ENCODE measurements at regions of chr1 and their contacts with region 1.

Region 1: DNA sequence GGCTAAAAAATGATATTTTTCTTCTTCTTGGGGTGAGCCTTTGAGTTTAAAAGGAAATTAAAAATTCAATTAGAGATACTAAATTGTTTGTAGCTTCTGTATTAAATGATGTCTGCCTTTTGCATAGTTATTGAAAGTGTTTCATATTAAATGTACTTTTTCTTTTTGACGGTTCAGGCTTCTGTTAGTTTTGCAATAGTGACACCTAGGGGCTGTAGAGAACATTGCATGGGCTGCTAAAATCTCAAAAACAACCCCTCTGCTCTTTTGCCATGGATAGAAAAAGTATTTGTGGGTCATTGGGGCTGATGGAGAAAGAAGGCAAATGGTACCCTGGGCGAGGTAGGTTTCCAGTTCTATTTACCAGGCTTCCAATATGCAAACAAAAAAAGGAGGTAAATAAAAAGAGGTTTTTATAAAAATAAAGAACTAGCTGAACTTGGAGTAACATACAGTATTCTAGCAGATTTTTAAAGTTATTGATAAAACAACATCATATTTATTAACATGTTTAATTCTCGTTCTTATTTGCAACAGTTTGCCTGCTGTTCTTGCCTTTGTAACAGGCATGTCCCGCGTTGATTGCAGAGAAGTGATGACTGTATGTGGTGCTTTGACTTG is 115.4 kb upstream of the HOOK1 start:
- DNase-seq: peak in 4 of 5 donors; percentile 42 to 49 (median 48)
- H3K4me3 ChIP-seq: no peak overlapping the region
- H3K4me3 Mint-ChIP-seq: no peak overlapping the region
- H3K27ac ChIP-seq: no peak overlapping the region
- H3K27ac Mint-ChIP-seq: no peak overlapping the region
- H3K4me1 ChIP-seq: peaks cover 22% of the 10 kb centered on the region
- H3K4me1 Mint-ChIP-seq: peaks cover 13 to 19% (median 15%) of the 10 kb centered on the region in 4 donors
- H3K27me3 ChIP-seq: no peaks in the 10 kb centered on the region
- H3K27me3 Mint-ChIP-seq: peaks cover 0 to 2% of the 10 kb centered on the region in 2 donors

Region 2: GRCh38 chr1:58739856-58740466 is 959.4 kb before region 1 on chr1:
- CTCF ChIA-PET with region 1: interaction called, 161 read pairs
- POLR2A ChIA-PET with region 1: no interaction called
- intact Hi-C with region 1: loop called (anchors 1 kb)
- DNase-seq: peak; percentile 39 to 69 (median 58)
- H3K4me3 ChIP-seq: no peak overlapping the region
- H3K4me3 Mint-ChIP-seq: no peak overlapping the region
- H3K27ac ChIP-seq: no peak overlapping the region
- H3K27ac Mint-ChIP-seq: no peak overlapping the region
- H3K4me1 ChIP-seq: no peaks in the 10 kb centered on the region
- H3K4me1 Mint-ChIP-seq: peaks cover 0 to 5% (median 3%) of the 10 kb centered on the region in 4 donors
- H3K27me3 ChIP-seq: no peaks in the 10 kb centered on the region
- H3K27me3 Mint-ChIP-seq: no peaks in the 10 kb centered on the region

Region 3: GRCh38 chr1:58755468-58755872 is 943.9 kb before region 1 on chr1:
- CTCF ChIA-PET with region 1: interaction called, 16 read pairs
- POLR2A ChIA-PET with region 1: no interaction called
- intact Hi-C with region 1: no loop called
- DNase-seq: peak; percentile 22 to 79 (median 28)
- H3K4me3 ChIP-seq: peak overlapping the region in 1 of 2 donors; percentile 9
- H3K4me3 Mint-ChIP-seq: peak overlapping the region; percentile 27 to 84 (median 72)
- H3K27ac ChIP-seq: peak overlapping the region; percentile 13
- H3K27ac Mint-ChIP-seq: peak overlapping the region; percentile 13 to 89 (median 69)
- H3K4me1 ChIP-seq: peaks cover 35% of the 10 kb centered on the region
- H3K4me1 Mint-ChIP-seq: peaks cover 35 to 57% (median 45%) of the 10 kb centered on the region in 4 donors
- H3K27me3 ChIP-seq: no peaks in the 10 kb centered on the region
- H3K27me3 Mint-ChIP-seq: no peaks in the 10 kb centered on the region

Region 4: GRCh38 chr1:58941471-58942289 is 757.7 kb before region 1 on chr1:
- CTCF ChIA-PET with region 1: interaction called, 3 read pairs
- POLR2A ChIA-PET with region 1: no interaction called
- intact Hi-C with region 1: loop called (anchors 1 kb)
- DNase-seq: peak; percentile 62 to 79 (median 76)
- H3K4me3 ChIP-seq: peak overlapping the region in 1 of 2 donors; percentile 21
- H3K4me3 Mint-ChIP-seq: peak overlapping the region; percentile 56 to 86 (median 78)
- H3K27ac ChIP-seq: no peak overlapping the region
- H3K27ac Mint-ChIP-seq: peak overlapping the region; percentile 64 to 88 (median 73)
- H3K4me1 ChIP-seq: peaks cover 59% of the 10 kb centered on the region
- H3K4me1 Mint-ChIP-seq: peaks cover 58 to 69% (median 63%) of the 10 kb centered on the region in 4 donors
- H3K27me3 ChIP-seq: no peaks in the 10 kb centered on the region
- H3K27me3 Mint-ChIP-seq: peaks cover 0 to 5% of the 10 kb centered on the region in 2 donors

Region 5: GRCh38 chr1:59682396-59683080 is 16.8 kb before region 1 on chr1:
- CTCF ChIA-PET with region 1: interaction called, 39 read pairs
- POLR2A ChIA-PET with region 1: no interaction called
- intact Hi-C with region 1: no loop called
- DNase-seq: no peak
- H3K4me3 ChIP-seq: no peak overlapping the region
- H3K4me3 Mint-ChIP-seq: no peak overlapping the region
- H3K27ac ChIP-seq: no peak overlapping the region
- H3K27ac Mint-ChIP-seq: no peak overlapping the region
- H3K4me1 ChIP-seq: no peaks in the 10 kb centered on the region
- H3K4me1 Mint-ChIP-seq: no peaks in the 10 kb centered on the region
- H3K27me3 ChIP-seq: no peaks in the 10 kb centered on the region
- H3K27me3 Mint-ChIP-seq: no peaks in the 10 kb centered on the region

Region 6: GRCh38 chr1:59814180-59814900 is 115.0 kb after region 1 on chr1:
- CTCF ChIA-PET with region 1: no interaction called
- POLR2A ChIA-PET with region 1: no interaction called
- intact Hi-C with region 1: no loop called
- DNase-seq: peak; percentile 86 to 94 (median 92)
- H3K4me3 ChIP-seq: peak overlapping the region in 1 of 2 donors; percentile 52
- H3K4me3 Mint-ChIP-seq: peak overlapping the region in 5 of 8 donors; percentile 82 to 93 (median 88)
- H3K27ac ChIP-seq: peak overlapping the region; percentile 70
- H3K27ac Mint-ChIP-seq: peak overlapping the region in 6 of 7 donors; percentile 79 to 96 (median 91)
- H3K4me1 ChIP-seq: peaks cover 20% of the 10 kb centered on the region
- H3K4me1 Mint-ChIP-seq: peaks cover 3 to 6% (median 5%) of the 10 kb centered on the region in 4 donors
- H3K27me3 ChIP-seq: no peaks in the 10 kb centered on the region
- H3K27me3 Mint-ChIP-seq: peaks cover 10 to 14% of the 10 kb centered on the region in 2 donors

Measured in CD4-positive, alpha-beta memory T cell (primary cell).